Endothelial cell of umbilical vein (primary cell): ENCODE measurements at regions of chr6 and their contacts with region 1.

Region 1: DNA sequence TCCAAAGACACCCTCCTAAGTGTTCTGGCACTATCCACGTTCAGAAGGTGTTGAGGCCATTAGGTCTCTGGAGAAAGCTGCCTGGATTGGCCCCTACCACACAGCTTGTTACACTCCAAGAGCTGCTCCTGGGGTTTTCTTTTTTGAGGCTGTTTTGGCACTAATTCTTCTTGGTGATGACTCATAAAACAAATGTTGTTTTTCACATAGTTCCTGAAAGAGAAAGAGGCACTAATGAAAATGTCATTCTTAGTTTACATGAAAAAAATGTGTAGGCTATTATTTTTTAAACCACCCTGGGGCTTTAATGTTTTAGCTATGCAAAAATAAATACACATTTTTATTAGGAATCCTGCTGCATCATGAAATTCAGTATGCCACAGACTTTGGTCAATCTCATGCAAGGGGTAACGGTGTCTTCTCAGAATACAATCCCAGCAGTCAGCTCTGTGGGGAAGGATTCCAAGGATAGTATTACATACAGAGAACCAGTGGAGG is 38.1 kb downstream of the TBPL1 start:
- DNase-seq: peak; percentile 80
- H3K4me3 ChIP-seq: no peak overlapping the region
- H3K27ac ChIP-seq: no peak overlapping the region
- H3K4me1 ChIP-seq: peaks cover 11% of the 10 kb centered on the region
- H3K27me3 ChIP-seq: no peaks in the 10 kb centered on the region
- CTCF ChIP-seq: no peak
- POLR2A ChIP-seq: no peak

Region 2: DNA sequence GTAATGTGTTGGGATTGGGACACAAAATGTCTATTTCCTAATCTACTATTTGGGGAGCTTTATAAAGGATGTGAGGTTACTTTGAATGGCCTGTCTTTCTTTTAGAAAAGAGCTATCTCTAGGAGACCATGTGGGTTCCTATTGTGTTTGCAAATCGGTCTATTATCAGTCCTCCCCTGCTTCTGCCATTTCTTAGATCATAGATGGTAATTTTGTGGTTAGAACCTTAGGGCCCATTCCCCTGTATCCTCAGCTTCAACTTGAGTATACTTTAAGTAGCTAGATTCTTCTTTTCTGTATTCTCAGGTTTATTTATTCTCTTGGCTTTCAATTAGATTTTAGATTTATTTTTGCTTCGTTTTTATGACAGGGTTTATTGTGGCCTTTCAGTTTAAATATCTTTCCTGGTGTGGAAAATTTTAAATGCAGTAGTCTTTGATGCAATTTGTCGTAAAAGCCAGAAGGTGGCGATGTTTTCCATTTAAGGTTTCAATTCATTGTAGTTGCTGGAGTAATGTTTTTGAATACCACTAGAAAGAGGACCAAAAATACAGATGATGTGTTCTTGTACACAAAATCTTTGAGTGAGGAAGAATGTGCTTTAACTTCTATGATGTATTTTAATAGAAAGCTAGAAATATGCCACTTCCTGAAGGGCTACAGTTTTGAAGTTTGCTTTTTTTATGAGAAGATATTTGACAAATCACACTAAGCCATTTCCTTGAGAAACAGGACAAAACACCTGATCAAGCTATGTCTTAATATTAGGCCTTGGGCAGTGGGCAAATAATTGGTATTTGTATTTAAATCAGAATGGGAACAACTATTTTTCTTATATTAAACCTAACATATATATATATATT is 17.8 kb before region 1 on chr6:
- CTCF ChIA-PET with region 1: interaction called, 13 read pairs
- POLR2A ChIA-PET with region 1: no interaction called
- dilution Hi-C with region 1: no loop called
- intact Hi-C with region 1: no loop called
- DNase-seq: peak; percentile 64
- H3K4me3 ChIP-seq: no peak overlapping the region
- H3K27ac ChIP-seq: no peak overlapping the region
- H3K4me1 ChIP-seq: peaks cover 4% of the 10 kb centered on the region
- H3K27me3 ChIP-seq: no peaks in the 10 kb centered on the region
- CTCF ChIP-seq: peak; percentile 42 to 45
- POLR2A ChIP-seq: no peak

Region 3: GRCh38 chr6:134047673-134048072 is 56.5 kb after region 1 on chr6:
- CTCF ChIA-PET with region 1: no interaction called
- POLR2A ChIA-PET with region 1: no interaction called
- dilution Hi-C with region 1: no loop called
- intact Hi-C with region 1: loop called (anchors 2 kb)
- DNase-seq: no peak
- H3K4me3 ChIP-seq: no peak overlapping the region
- H3K27ac ChIP-seq: no peak overlapping the region
- H3K4me1 ChIP-seq: peaks cover 2% of the 10 kb centered on the region
- H3K27me3 ChIP-seq: no peaks in the 10 kb centered on the region
- CTCF ChIP-seq: no peak
- POLR2A ChIP-seq: no peak